Mammary epithelial cell (primary cell): ENCODE measurements at regions of chr12 and their contacts with region 1.

Region 1: GRCh38 chr12:115383669-115384068 is 699.7 kb upstream of the TBX3 start:
- DNase-seq: peak; percentile 100
- H3K4me3 ChIP-seq: no peak overlapping the region
- H3K27ac ChIP-seq: peak overlapping the region; percentile 77
- H3K4me1 ChIP-seq: peaks cover 14% of the 10 kb centered on the region
- H3K27me3 ChIP-seq: no peaks in the 10 kb centered on the region
- CTCF ChIP-seq: no peak

Region 2: DNA sequence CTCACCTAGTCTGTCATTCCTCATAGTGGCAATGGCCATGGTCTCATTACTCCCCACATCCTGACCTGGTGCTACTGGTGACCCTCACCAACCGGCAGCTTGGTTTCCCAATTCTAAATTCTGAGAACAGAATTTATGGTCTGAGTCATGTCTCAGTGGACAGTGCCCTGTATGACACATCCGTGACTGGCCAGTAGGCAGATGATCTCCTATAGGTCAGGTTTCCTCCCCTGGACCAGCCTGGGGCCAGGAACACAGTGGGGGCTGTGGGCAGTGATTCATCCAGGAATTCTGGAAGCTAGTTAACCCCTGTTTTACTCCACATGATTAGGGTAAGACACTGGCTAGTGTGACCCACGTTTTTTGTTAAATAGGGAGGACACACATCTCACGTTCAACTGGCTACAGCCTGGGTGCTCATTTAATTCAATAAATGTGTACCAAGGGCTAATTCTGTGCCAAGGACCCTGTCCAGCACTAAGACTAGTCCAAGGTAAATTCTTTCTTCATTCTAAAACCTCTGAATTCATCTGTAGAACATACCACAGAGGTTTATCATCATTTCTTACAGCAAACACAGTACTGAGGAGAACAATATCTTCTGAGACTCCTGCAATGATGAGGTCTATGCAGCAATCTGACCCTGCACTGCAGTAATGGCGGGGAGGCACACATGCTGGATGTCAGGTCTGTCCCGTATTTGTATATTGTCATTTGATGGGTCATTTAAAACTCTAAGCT is 450.1 kb before region 1 on chr12:
- CTCF ChIA-PET with region 1: no interaction called
- dilution Hi-C with region 1: no loop called
- in situ Hi-C with region 1: no loop called
- intact Hi-C with region 1: loop called (anchors 10 kb)
- DNase-seq: peak; percentile 83
- H3K4me3 ChIP-seq: no peak overlapping the region
- H3K27ac ChIP-seq: peak overlapping the region; percentile 57
- H3K4me1 ChIP-seq: peaks cover 25% of the 10 kb centered on the region
- H3K27me3 ChIP-seq: no peaks in the 10 kb centered on the region
- CTCF ChIP-seq: no peak

Region 3: GRCh38 chr12:115257791-115258190 is 125.9 kb before region 1 on chr12:
- CTCF ChIA-PET with region 1: no interaction called
- dilution Hi-C with region 1: no loop called
- in situ Hi-C with region 1: no loop called
- intact Hi-C with region 1: loop called (anchors 5 kb)
- DNase-seq: peak; percentile 94
- H3K4me3 ChIP-seq: no peak overlapping the region
- H3K27ac ChIP-seq: no peak overlapping the region
- H3K4me1 ChIP-seq: peaks cover 22% of the 10 kb centered on the region
- H3K27me3 ChIP-seq: no peaks in the 10 kb centered on the region
- CTCF ChIP-seq: no peak

Region 4: DNA sequence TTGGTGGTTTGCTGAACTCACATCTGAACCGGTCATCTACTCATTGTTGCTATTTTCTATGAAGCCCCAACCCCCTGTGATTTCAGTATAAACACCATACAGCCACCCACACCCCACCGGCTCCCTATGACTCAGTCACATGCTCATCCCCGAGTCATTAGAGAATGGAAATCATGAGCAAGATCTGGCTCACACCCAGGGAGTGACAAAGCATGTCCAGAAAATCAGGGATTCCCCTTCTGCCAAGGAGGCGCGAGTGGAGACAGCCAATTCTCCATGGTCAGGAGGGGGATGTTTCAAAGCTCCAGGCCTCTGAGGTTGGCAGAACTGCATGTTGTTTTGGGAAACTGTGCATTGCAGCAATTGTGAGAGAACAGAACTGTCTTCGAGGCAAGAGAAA is 42.2 kb before region 1 on chr12:
- CTCF ChIA-PET with region 1: no interaction called
- dilution Hi-C with region 1: no loop called
- in situ Hi-C with region 1: no loop called
- intact Hi-C with region 1: loop called (anchors 1 kb)
- DNase-seq: peak; percentile 100
- H3K4me3 ChIP-seq: no peak overlapping the region
- H3K27ac ChIP-seq: peak overlapping the region; percentile 93
- H3K4me1 ChIP-seq: peaks cover 18% of the 10 kb centered on the region
- H3K27me3 ChIP-seq: no peaks in the 10 kb centered on the region
- CTCF ChIP-seq: no peak

Region 5: GRCh38 chr12:115354007-115354452 is 29.6 kb before region 1 on chr12:
- CTCF ChIA-PET with region 1: no interaction called
- dilution Hi-C with region 1: no loop called
- in situ Hi-C with region 1: no loop called
- intact Hi-C with region 1: no loop called
- DNase-seq: peak; percentile 99
- H3K4me3 ChIP-seq: peak overlapping the region; percentile 41 to 51 (median 47)
- H3K27ac ChIP-seq: peak overlapping the region; percentile 96
- H3K4me1 ChIP-seq: peaks cover 17% of the 10 kb centered on the region
- H3K27me3 ChIP-seq: no peaks in the 10 kb centered on the region
- CTCF ChIP-seq: no peak